GM12878 (cell line): ENCODE measurements at regions of chr15 and their contacts with region 1.

Region 1: GRCh38 chr15:69994429-69995201 is 103.1 kb downstream of the TLE3 start:
- DNase-seq: no peak
- ATAC-seq: peak; percentile 69
- H3K4me3 ChIP-seq: no peak overlapping the region
- H3K27ac ChIP-seq: no peak overlapping the region; the same call in 1 of the 2 replicates
- H3K4me1 ChIP-seq: peaks cover 24% of the 10 kb centered on the region
- H3K27me3 ChIP-seq: no peaks in the 10 kb centered on the region
- CTCF ChIP-seq: no peak
- EP300 ChIP-seq: no peak
- POLR2A ChIP-seq: no peak
- RAD21 ChIP-seq: no peak

Region 2: GRCh38 chr15:69919816-69920215 is 74.8 kb before region 1 on chr15:
- CTCF ChIA-PET with region 1: no interaction called
- POLR2A ChIA-PET with region 1: no interaction called
- RAD21 ChIA-PET with region 1: no interaction called
- SMC1A ChIA-PET with region 1: no interaction called
- in situ Hi-C with region 1: no loop called
- intact Hi-C with region 1: no loop called
- DNase-seq: no peak
- ATAC-seq: no peak
- H3K4me3 ChIP-seq: no peak overlapping the region
- H3K27ac ChIP-seq: no peak overlapping the region
- H3K4me1 ChIP-seq: peaks cover 21% of the 10 kb centered on the region
- H3K27me3 ChIP-seq: peaks cover 0 to 3% of the 10 kb centered on the region in 2 experiments; a peak in 3 of 4 replicates
- CTCF ChIP-seq: no peak
- EP300 ChIP-seq: no peak
- POLR2A ChIP-seq: no peak
- RAD21 ChIP-seq: no peak

Region 3: GRCh38 chr15:69951907-69952555 is 42.6 kb before region 1 on chr15:
- CTCF ChIA-PET with region 1: no interaction called
- POLR2A ChIA-PET with region 1: no interaction called
- RAD21 ChIA-PET with region 1: no interaction called
- SMC1A ChIA-PET with region 1: no interaction called
- in situ Hi-C with region 1: no loop called
- intact Hi-C with region 1: no loop called
- DNase-seq: no peak
- ATAC-seq: no peak
- H3K4me3 ChIP-seq: no peak overlapping the region
- H3K27ac ChIP-seq: no peak overlapping the region
- H3K4me1 ChIP-seq: no peaks in the 10 kb centered on the region
- H3K27me3 ChIP-seq: no peaks in the 10 kb centered on the region
- CTCF ChIP-seq: no peak
- EP300 ChIP-seq: no peak
- POLR2A ChIP-seq: no peak
- RAD21 ChIP-seq: no peak

Region 4: DNA sequence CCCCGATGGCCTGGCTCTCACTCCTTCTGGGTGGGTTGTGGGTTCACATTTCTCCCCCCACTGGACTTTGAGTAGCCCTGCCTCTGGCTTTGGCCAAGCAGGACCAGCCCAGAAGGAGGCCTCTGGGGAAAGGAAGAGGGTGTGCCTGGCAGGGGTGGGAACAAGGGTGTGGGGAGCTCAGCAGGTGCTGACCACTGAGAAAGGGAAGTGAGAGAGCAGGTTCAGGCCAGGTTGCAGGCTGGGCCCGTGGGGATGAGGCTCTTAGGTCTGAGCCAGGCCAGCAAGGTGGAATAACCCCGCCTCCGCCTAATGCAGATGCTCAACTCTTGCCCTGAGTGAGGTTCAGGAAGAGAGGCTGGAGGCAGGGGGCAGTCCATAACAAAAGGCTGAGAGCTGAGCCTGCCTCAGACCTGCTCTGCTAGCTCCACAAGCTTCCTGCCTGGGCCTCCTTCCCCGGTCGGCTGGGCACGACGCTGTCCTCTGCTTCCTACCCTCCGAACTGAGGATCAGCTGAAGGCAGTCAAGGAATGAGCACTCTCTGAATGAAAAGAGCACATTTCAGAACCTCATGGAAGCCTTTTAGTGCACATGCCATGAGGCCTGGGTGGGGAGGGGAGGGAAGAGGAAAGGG is 20.4 kb after region 1 on chr15:
- CTCF ChIA-PET with region 1: no interaction called
- POLR2A ChIA-PET with region 1: no interaction called
- RAD21 ChIA-PET with region 1: interaction called, 12 read pairs
- SMC1A ChIA-PET with region 1: interaction called, 4 read pairs
- in situ Hi-C with region 1: no loop called
- intact Hi-C with region 1: no loop called
- DNase-seq: peak; percentile 93
- ATAC-seq: peak; percentile 89
- H3K4me3 ChIP-seq: peak overlapping the region; percentile 10; the same call in 1 of the 2 replicates
- H3K27ac ChIP-seq: peak overlapping the region; percentile 84
- H3K4me1 ChIP-seq: peaks cover 60% of the 10 kb centered on the region
- H3K27me3 ChIP-seq: no peaks in the 10 kb centered on the region
- CTCF ChIP-seq: peak in 1 of 3 experiments; percentile 54; a peak in 2 of 6 replicates
- EP300 ChIP-seq: peak; percentile 76 to 79; a peak in 3 of 4 replicates
- POLR2A ChIP-seq: peak; percentile 79
- RAD21 ChIP-seq: peak; percentile 44; the same call in 1 of the 2 replicates

Region 5: GRCh38 chr15:70083946-70084345 is 89.3 kb after region 1 on chr15:
- CTCF ChIA-PET with region 1: no interaction called
- POLR2A ChIA-PET with region 1: no interaction called
- RAD21 ChIA-PET with region 1: no interaction called
- SMC1A ChIA-PET with region 1: no interaction called
- in situ Hi-C with region 1: no loop called
- intact Hi-C with region 1: no loop called
- DNase-seq: peak; percentile 49
- ATAC-seq: peak; percentile 89
- H3K4me3 ChIP-seq: peak overlapping the region; percentile 24; the same call in 1 of the 2 replicates
- H3K27ac ChIP-seq: no peak overlapping the region
- H3K4me1 ChIP-seq: peaks cover 27% of the 10 kb centered on the region
- H3K27me3 ChIP-seq: no peaks in the 10 kb centered on the region
- CTCF ChIP-seq: no peak
- EP300 ChIP-seq: no peak
- POLR2A ChIP-seq: no peak
- RAD21 ChIP-seq: no peak

Region 6: GRCh38 chr15:70271422-70272088 is 276.9 kb after region 1 on chr15:
- CTCF ChIA-PET with region 1: no interaction called
- POLR2A ChIA-PET with region 1: no interaction called
- RAD21 ChIA-PET with region 1: no interaction called
- SMC1A ChIA-PET with region 1: no interaction called
- in situ Hi-C with region 1: no loop called
- intact Hi-C with region 1: no loop called
- DNase-seq: no peak
- ATAC-seq: no peak
- H3K4me3 ChIP-seq: no peak overlapping the region
- H3K27ac ChIP-seq: no peak overlapping the region
- H3K4me1 ChIP-seq: peaks cover 12% of the 10 kb centered on the region
- H3K27me3 ChIP-seq: no peaks in the 10 kb centered on the region; a peak in 2 of 4 replicates
- CTCF ChIP-seq: no peak
- EP300 ChIP-seq: no peak
- POLR2A ChIP-seq: no peak
- RAD21 ChIP-seq: no peak